ENCODE measurements at regions of chr10 and their contacts with region 1.

Region 1: DNA sequence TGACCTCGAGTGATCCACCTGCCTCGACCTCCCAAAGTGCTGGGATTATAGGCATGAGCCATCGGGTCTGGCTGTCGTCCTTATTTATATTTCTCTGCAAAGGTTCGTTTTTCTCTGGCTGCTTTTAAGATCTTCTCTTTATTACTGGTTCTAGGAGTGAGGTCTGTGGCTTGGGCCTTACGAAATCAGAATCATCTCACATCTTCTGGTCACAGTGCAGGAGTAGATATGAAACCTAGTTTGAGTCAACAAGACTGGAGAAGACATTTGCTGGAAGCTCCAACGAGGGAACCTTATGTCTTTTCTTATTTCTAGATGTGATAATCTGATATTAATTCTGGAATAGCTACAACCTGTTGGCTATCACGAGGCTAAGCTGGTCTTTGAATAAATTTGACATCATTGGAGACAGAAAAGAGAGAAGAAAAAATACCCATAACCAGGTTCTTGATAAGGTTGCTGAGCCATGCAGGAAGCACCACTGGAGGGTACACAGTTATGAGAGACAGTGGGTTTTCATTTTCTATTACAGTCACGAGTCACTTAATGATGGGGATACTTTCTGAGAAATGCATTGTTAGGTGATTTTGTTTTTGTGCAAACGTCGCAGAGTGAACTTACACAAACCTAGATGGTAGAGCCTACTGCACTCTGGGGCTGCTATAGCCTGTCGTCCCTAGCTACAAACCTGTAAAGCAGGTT is 25.6 kb upstream of the IL15RA start:
- DNase-seq: no peak
- H3K4me3 Mint-ChIP-seq: peak overlapping the region; percentile 28
- H3K27ac Mint-ChIP-seq: peak overlapping the region; percentile 85
- H3K4me1 Mint-ChIP-seq: peaks cover 48% of the 10 kb centered on the region
- H3K27me3 Mint-ChIP-seq: peaks cover 6% of the 10 kb centered on the region

Region 2: GRCh38 chr10:5889624-5890451 is 113.1 kb before region 1 on chr10 and contains the starts of genes ANKRD16 and FBH1:
- intact Hi-C with region 1: loop called (anchors 5 kb)
- DNase-seq: peak; percentile 98
- H3K4me3 Mint-ChIP-seq: peak within 1 kb of the TSS; percentile 94
- H3K27ac Mint-ChIP-seq: peak within 1 kb of the TSS; percentile 79
- H3K4me1 Mint-ChIP-seq: peaks cover 41% of the 10 kb centered on the region
- H3K27me3 Mint-ChIP-seq: no peaks in the 10 kb centered on the region
- total RNA-seq, gene ANKRD16: 10.4 and 11.6 TPM in 2 replicates
- total RNA-seq, gene FBH1: 57.2 and 58.0 TPM in 2 replicates

Region 3: DNA sequence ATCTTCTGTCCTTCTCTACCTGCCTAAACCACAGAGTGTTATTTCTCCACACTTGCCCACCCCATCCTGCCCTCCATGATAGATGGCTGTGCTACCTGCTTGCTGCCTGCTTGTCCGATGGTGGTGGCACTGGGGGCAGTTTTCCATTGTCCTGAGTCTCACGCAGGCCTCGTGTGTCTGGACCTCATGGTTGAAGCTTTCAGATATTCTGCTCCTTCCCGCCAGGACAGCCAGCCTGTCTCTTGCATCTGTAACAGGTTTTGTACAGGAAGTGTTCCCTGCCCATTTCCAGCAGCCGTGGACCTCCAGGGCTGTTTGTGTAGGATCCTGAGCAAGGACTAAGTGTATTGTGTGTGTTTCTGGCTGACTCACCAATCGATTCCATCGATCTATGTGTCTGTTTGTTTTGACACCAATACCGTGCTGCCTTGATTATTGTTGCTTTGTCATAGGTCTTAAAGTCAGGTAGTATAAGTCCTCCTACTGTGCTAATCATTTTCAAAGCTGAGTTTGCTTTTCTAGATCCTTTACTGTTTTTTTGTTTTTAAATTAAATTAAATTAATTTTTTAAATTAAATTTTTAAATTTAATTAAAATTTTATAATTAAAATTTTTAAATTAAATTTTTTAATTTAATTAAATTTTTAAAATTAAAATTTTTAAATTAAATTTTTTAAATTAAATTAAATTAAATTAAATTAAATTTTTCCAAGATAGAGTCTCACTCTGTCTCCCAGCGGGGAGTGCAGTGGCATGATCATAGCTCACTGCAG is 34.1 kb before region 1 on chr10:
- intact Hi-C with region 1: no loop called
- DNase-seq: no peak
- H3K4me3 Mint-ChIP-seq: no peak overlapping the region
- H3K27ac Mint-ChIP-seq: no peak overlapping the region
- H3K4me1 Mint-ChIP-seq: peaks cover 28% of the 10 kb centered on the region
- H3K27me3 Mint-ChIP-seq: no peaks in the 10 kb centered on the region

Measured in activated T-helper 2 cell treated with anti-CD3 and anti-CD28 coated beads, Interferon-gamma antibody, Interleukin-2, Interleukin-4, amounts not matched to agents 10 μg/mL and 5 μg/mL and 100 μg/mL, durations not matched to agents 14 hours and 24 hours and 36 hours (primary cell).